Right cardiac atrium (tissue), 5 donors: ENCODE measurements at regions of chr15 and their contacts with region 1.

Region 1: GRCh38 chr15:52186651-52187486 is 4.3 kb downstream of the GNB5 start:
- DNase-seq: no peak
- ATAC-seq: peak; percentile 47 to 57
- H3K4me3 ChIP-seq: no peak overlapping the region
- H3K27ac ChIP-seq: peak overlapping the region; percentile 1
- H3K4me1 ChIP-seq: no peaks in the 10 kb centered on the region
- H3K27me3 ChIP-seq: no peaks in the 10 kb centered on the region

Region 2: DNA sequence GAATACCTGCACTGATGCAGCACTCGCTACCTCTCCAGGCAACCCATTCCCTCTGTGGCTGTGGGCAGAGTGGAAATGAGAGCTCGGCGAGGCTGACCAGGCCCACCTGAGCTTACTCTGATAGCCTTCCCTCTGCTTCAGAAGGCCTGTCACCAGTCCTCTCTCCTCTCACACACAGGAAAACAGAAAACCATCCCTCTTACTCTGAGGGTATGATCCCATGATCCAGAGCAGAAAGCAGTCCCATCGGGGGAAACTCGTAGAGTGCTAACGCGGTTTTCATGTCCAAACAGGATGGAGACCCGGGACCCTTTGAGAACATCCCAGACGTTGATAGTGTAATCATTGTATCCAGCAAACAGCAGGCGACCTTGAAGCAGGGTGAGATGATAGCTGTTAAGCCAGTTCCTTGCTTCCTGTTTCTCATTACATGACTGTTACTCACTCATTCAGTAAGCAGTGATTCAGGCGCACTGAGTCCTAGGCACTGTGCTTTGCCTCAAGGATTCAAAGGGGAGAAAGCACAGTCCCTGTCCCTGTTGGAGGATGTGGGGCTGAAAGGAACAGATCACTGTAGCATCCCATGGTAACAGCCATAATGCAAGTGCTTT is 62.5 kb before region 1 on chr15:
- intact Hi-C with region 1: no loop called
- DNase-seq: no peak
- ATAC-seq: no peak
- H3K4me3 ChIP-seq: no peak overlapping the region
- H3K27ac ChIP-seq: no peak overlapping the region
- H3K4me1 ChIP-seq: no peaks in the 10 kb centered on the region
- H3K27me3 ChIP-seq: no peaks in the 10 kb centered on the region

Region 3: DNA sequence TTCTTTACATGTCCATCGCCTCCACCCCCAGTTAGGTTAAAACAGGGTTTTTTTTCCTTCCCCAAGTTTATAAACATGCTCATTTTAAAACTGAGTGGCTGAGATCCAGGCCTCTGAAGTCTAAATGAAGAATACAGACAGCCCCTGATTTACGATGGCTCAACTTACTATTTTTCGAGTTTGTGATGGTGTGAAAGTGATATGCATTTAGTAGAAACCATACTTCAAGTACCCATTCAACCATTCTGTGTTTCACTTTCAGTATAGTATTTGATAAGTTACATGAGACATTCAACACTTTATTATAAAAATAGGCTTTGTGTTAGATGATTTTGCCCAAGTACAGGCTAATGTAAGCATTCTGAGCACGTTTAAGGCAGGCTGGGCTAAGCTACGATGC is 34.9 kb after region 1 on chr15:
- intact Hi-C with region 1: loop called in 1 of 4 experiments (anchors 5 kb)
- DNase-seq: no peak
- ATAC-seq: no peak
- H3K4me3 ChIP-seq: no peak overlapping the region
- H3K27ac ChIP-seq: no peak overlapping the region
- H3K4me1 ChIP-seq: no peaks in the 10 kb centered on the region
- H3K27me3 ChIP-seq: no peaks in the 10 kb centered on the region